Right ventricle myocardium inferior (tissue), 1 donor: ENCODE measurements at regions of chr7 and their contacts with region 1.

Region 1: GRCh38 chr7:38660427-38661099 is 29.4 kb upstream of the AMPH start:
- DNase-seq: peak; percentile 74
- ATAC-seq: no peak

Region 2: GRCh38 chr7:38398725-38399321 is 261.7 kb before region 1 on chr7:
- intact Hi-C with region 1: loop called (anchors 5 kb)
- DNase-seq: peak; percentile 78
- ATAC-seq: no peak

Region 3: DNA sequence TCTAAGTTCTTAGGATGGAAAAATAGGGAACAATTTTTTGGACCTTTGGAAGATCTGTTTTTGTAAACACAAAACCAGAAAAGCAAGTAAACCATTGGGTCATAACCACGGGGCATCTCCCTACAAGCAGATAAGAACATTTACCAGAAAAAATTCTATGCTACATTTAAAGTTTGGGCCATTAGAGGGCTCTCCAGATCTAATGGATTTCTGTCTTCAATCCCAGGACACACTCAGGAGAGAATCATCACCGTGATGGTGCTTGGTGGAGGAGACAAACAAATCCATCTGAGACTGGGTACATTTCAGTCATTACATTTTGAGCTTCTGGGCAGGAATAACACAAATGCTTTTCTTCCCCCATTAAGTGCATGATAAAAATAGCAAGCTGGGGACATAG is 208.7 kb before region 1 on chr7:
- intact Hi-C with region 1: loop called (anchors 5 kb)
- DNase-seq: no peak
- ATAC-seq: peak; percentile 60